ENCODE measurements at regions of chr1 and their contacts with region 1.

Region 1: GRCh38 chr1:89794406-89794805 is 26.4 kb upstream of the LRRC8D start:
- DNase-seq: no peak
- H3K4me3 ChIP-seq: no peak overlapping the region
- CTCF ChIP-seq: no peak
- POLR2A ChIP-seq: no peak

Region 2: DNA sequence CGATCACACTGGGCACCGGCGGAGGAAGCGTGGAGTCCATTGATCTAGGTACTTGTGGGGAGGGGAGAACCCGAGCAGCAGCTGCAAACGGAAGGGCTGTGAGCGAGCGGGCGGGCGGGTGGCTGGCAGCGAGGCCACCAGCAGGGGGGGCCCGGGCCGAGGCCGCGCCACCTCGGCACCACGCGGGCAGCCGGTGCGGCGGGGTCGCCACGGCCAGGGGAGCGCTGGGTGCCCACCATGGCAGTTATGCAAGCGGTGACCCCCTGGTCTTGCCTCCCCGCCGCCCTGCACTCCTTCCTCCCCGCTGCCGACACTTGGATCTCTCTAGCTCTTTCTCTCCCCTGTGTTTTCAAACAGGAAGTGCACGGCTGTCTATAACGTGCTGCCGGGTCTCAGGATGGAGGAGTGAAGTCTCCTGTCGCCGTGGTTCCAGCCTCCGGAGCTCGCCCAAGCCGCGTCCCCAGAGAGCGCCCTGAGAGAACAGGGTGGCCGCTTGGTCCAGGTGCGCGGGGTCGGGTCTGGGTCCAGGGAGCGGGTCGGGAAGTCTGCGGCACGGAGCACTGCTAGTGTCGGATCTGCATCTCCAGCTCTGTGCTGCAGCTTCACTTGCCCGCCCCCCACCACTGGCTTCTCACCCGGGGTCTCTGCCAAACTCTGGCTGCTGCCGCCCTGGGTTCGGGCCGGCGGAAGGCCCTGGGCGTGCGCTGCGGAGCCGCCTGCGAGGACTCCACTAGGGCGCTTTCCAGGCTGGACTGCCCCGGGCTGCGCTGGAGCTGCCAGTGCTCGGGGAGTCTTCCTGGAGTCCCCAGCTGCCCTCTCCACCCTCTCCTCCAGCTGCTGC is 49.1 kb after region 1 on chr1:
- intact Hi-C with region 1: no loop called
- DNase-seq: peak; percentile 44 to 94
- H3K4me3 ChIP-seq: peak overlapping the region; percentile 64
- CTCF ChIP-seq: no peak
- POLR2A ChIP-seq: no peak

Region 3: GRCh38 chr1:90114521-90115141 is 320.2 kb after region 1 on chr1:
- intact Hi-C with region 1: loop called (anchors 5 kb)
- DNase-seq: no peak
- H3K4me3 ChIP-seq: no peak overlapping the region
- CTCF ChIP-seq: no peak
- POLR2A ChIP-seq: no peak

Measured in lower leg skin (tissue), 4 donors.